GM23248 (cell line): ENCODE measurements at regions of chr9 and their contacts with region 1.

Region 1: GRCh38 chr9:137034863-137035761 is 3.2 kb upstream of the FUT7 start:
- DNase-seq: peak; percentile 87
- H3K4me3 ChIP-seq: no peak overlapping the region
- H3K27ac ChIP-seq: no peak overlapping the region
- H3K4me1 ChIP-seq: no peaks in the 10 kb centered on the region
- H3K27me3 ChIP-seq: no peaks in the 10 kb centered on the region

Region 2: DNA sequence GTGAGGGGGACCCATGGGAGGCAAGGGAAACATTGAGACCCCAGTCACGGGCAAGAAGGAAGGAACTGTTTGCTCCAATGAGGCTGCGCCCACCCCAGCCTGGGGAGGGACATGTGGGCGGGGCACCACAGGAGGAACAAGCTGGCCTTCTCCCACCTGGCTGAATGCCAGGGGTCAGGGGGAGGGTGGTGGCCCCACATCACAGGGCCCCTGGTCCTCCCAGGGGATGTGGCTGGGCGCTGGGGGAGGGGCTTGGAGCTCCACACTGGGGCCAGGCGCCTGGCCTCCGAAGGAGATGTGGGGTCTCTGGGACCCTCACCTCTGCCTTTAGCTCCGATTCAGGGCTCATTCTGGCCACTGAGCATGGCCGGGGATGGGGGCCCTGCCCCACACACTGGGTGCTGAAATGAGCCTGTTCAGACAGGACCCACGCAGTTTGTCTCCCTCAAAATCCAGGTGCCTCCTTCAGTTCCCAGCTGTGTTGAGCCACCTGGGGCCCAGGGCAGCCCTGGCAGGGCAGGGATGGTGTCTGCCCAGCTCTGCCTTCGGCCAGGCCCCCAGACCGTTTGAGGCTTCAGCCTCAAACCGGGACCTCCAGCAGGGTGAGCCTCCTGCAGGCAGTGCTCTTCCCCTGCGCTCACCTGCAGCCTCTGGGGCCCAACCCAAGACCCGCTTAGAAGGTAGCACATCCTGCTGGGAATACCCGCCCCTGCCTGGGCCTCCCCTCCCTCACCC is 456.0 kb before region 1 on chr9:
- in situ Hi-C with region 1: no loop called
- DNase-seq: peak; percentile 26
- H3K4me3 ChIP-seq: no peak overlapping the region
- H3K27ac ChIP-seq: no peak overlapping the region
- H3K4me1 ChIP-seq: no peaks in the 10 kb centered on the region
- H3K27me3 ChIP-seq: no peaks in the 10 kb centered on the region

Region 3: GRCh38 chr9:136769710-136770191 is 265.4 kb before region 1 on chr9:
- in situ Hi-C with region 1: loop called (anchors 10 kb)
- DNase-seq: peak; percentile 50
- H3K4me3 ChIP-seq: no peak overlapping the region
- H3K27ac ChIP-seq: no peak overlapping the region
- H3K4me1 ChIP-seq: no peaks in the 10 kb centered on the region
- H3K27me3 ChIP-seq: peaks cover 8% of the 10 kb centered on the region; the same call in 1 of the 2 replicates